HepG2 (cell line): ENCODE measurements at regions of chr2 and their contacts with region 1.

Region 1: DNA sequence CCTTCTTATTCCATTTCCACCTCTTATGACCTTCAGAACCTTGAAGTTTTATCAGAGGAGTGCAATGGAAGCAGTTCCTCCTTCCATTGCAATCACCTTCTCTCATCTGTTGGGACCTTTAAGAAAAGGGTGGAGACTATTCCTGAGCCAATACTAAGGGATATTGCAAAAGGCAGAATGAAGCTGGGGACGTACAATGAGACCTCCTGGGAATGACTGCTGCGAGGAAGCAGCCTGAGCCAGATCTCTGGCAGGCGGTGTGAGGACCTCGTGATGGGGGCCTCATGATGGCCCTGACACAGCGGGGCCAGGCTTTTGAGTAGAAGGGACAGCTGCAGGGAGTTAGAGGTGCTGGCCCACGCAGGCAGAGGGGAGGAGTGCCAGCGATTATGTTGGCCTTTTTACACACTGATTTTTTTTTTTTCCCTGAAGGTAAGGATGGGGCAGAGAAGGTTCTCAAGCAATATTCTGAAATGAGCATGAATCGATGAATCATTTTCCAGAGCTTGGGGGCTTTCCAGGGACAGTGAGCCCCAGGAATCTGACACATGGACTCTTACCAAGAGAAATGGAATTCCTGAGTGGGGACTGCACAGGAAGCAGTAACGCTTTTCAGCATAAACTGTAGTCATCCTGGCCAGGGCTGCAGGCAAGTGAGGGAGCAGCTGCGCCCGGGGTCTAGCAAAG is 40.0 kb upstream of the LAPTM4A start:
- DNase-seq: no peak
- ATAC-seq: no peak
- H3K4me3 ChIP-seq: no peak overlapping the region; a peak in 1 of 6 replicates
- H3K27ac ChIP-seq: no peak overlapping the region
- H3K4me1 ChIP-seq: peaks cover 79% of the 10 kb centered on the region
- H3K27me3 ChIP-seq: no peaks in the 10 kb centered on the region; a peak in 1 of 5 replicates
- CTCF ChIP-seq: no peak
- EP300 ChIP-seq: no peak
- POLR2A ChIP-seq: no peak
- RAD21 ChIP-seq: no peak

Region 2: GRCh38 chr2:20080839-20081415 is 10.5 kb before region 1 on chr2:
- CTCF ChIA-PET with region 1: no interaction called
- POLR2A ChIA-PET with region 1: interaction called, 5 read pairs
- in situ Hi-C with region 1: no loop called
- intact Hi-C with region 1: loop called (anchors 1 kb)
- DNase-seq: peak; percentile 68
- ATAC-seq: peak; percentile 83
- H3K4me3 ChIP-seq: peak overlapping the region; percentile 6 to 49 (median 35)
- H3K27ac ChIP-seq: no peak overlapping the region
- H3K4me1 ChIP-seq: peaks cover 56% of the 10 kb centered on the region
- H3K27me3 ChIP-seq: no peaks in the 10 kb centered on the region; a peak in 1 of 5 replicates
- CTCF ChIP-seq: no peak
- EP300 ChIP-seq: no peak
- POLR2A ChIP-seq: no peak
- RAD21 ChIP-seq: peak; percentile 41; the same call in 1 of the 2 replicates